Activated CD4-positive, alpha-beta T cell treated with anti-CD3 and anti-CD28 coated beads, Interleukin-2, amount 10 ng/mL, durations not matched to agents 24 days and 14 days (primary cell): ENCODE measurements at regions of chr20 and their contacts with region 1.

Region 1: DNA sequence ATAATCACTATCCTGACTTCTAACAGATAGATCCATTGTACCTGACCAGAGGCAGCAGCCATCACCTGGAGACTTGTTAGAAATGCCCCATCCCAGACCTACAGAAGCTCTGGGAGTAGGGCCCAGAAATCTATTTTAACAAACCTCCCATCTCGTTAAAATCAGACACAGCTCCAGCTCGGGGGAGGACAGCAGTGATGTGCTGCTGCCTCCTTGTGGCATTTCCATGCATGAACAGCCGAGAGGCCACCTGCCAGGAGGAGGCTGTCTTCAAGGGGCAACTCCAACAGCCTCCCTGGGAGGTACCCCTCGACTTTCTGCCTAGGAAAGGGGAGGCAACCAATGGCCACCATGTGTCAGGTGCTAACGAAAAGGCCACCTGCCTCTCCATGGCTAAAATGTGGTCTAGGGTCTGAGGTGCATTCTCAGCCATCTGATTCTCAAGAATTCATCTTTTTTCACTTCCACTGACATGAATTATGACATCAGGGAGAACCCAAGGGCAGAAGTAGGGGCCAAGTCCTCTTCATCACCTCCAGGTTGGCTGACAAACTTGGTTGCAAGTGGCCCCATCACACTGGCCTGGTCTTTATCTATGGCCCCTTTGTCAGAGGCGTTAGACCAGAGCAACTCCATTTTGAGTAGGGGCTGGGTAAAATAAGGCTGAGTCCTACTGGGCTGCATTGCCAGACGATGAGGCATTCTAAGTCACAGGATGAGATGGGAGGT is 12.2 kb upstream of the KCNK15 start:
- DNase-seq: peak; percentile 90
- H3K4me3 Mint-ChIP-seq: no peak overlapping the region
- H3K27ac Mint-ChIP-seq: no peak overlapping the region
- H3K4me1 Mint-ChIP-seq: peaks cover 24% of the 10 kb centered on the region
- H3K27me3 Mint-ChIP-seq: no peaks in the 10 kb centered on the region

Region 2: DNA sequence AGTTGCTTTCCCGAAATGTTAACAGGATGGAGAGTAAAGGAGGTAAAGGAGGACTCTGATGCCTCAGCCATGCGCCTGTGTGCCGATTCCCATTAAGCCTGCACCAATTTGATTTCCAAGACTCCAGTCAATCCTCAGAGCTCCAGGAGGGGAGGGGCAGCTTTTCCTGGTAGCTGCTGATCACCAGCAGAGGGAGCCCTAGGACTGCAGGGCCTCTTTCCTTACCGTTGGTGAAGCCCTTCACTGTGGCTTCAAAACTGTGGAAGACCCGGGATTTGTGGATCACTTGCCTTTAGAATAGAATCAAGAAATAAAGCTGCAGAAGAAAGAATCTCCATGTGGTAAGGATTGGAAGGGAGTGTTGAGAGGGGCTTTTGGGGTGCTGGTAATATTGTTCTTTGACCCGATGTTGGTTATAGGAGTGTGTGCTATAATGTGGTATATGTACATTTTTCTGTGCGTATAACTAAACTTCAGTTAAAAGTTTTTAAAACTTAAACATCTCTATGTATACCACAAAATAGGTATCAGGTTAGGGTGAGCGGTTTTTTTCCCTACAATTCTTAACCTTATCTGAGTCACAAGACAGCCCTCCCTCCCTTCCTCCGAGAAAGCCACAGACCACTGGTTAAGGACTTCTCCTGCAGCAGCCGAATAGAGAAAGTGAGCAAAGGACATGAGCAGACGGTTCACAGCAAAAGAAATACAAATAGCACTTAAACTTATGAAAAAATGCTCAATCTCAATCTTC is 516.0 kb before region 1 on chr20:
- intact Hi-C with region 1: loop called (anchors 5 kb)
- DNase-seq: peak; percentile 92
- H3K4me3 Mint-ChIP-seq: peak overlapping the region; percentile 77
- H3K27ac Mint-ChIP-seq: peak overlapping the region; percentile 63
- H3K4me1 Mint-ChIP-seq: peaks cover 30% of the 10 kb centered on the region
- H3K27me3 Mint-ChIP-seq: no peaks in the 10 kb centered on the region

Region 3: GRCh38 chr20:44683263-44684046 is 50.0 kb before region 1 on chr20:
- intact Hi-C with region 1: loop called (anchors 1 kb)
- DNase-seq: peak; percentile 85
- H3K4me3 Mint-ChIP-seq: no peak overlapping the region
- H3K27ac Mint-ChIP-seq: no peak overlapping the region
- H3K4me1 Mint-ChIP-seq: peaks cover 7% of the 10 kb centered on the region
- H3K27me3 Mint-ChIP-seq: peaks cover 2% of the 10 kb centered on the region